Uterus (tissue), 4 donors: ENCODE measurements at regions of chr20 and their contacts with region 1.

Region 1: GRCh38 chr20:4607287-4607713 is 114.4 kb upstream of the PRND start:
- DNase-seq: peak; percentile 55 to 62
- H3K4me3 ChIP-seq: no peak overlapping the region
- H3K27ac ChIP-seq: peak overlapping the region in 1 of 2 donors; percentile 42
- H3K4me1 ChIP-seq: peaks cover 0 to 3% of the 10 kb centered on the region in 2 donors
- H3K27me3 ChIP-seq: no peaks in the 10 kb centered on the region
- CTCF ChIP-seq: peak; percentile 89 to 96 (median 96)
- POLR2A ChIP-seq: no peak

Region 2: DNA sequence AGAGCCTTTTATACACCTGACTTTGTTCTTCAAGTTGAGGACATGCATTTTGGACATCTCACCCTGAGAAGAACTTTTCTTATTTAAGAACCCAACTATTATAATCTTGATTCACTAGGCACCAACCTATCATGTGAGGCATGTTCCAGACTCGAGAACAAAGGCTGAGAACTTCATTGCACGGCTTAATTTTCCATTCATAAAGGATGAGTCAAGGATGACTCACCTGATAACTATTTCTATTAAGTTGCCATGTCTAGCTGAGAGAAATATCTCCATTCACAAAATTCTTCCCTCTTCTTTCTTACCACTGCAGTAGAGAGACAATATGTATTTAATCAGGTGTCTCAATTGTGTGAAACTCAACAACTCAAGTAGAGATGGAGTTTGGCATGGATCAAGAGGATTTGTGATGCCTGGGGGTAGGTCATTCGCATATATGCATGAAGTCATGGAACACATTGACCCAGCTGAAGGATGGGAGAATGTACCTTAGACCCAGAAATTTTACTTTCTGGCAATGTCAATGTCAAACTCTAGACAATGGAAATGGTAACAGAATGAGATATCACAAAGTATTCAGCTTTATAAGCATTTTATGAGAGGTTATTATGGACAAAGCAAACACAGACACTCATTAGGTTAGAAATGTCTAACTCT is 94.3 kb before region 1 on chr20:
- intact Hi-C with region 1: no loop called
- DNase-seq: no peak
- H3K4me3 ChIP-seq: no peak overlapping the region
- H3K27ac ChIP-seq: no peak overlapping the region
- H3K4me1 ChIP-seq: no peaks in the 10 kb centered on the region
- H3K27me3 ChIP-seq: no peaks in the 10 kb centered on the region
- CTCF ChIP-seq: no peak
- POLR2A ChIP-seq: no peak

Region 3: GRCh38 chr20:4633780-4634179 is 26.5 kb after region 1 on chr20:
- intact Hi-C with region 1: no loop called
- DNase-seq: no peak
- H3K4me3 ChIP-seq: no peak overlapping the region
- H3K27ac ChIP-seq: no peak overlapping the region
- H3K4me1 ChIP-seq: no peaks in the 10 kb centered on the region
- H3K27me3 ChIP-seq: no peaks in the 10 kb centered on the region
- CTCF ChIP-seq: no peak
- POLR2A ChIP-seq: no peak

Region 4: GRCh38 chr20:4720041-4720976 is 113.0 kb after region 1 on chr20:
- intact Hi-C with region 1: loop called (anchors 2 kb)
- DNase-seq: peak; percentile 76 to 84
- H3K4me3 ChIP-seq: no peak overlapping the region
- H3K27ac ChIP-seq: peak overlapping the region; percentile 82 to 94
- H3K4me1 ChIP-seq: peaks cover 0 to 8% of the 10 kb centered on the region in 2 donors
- H3K27me3 ChIP-seq: no peaks in the 10 kb centered on the region
- CTCF ChIP-seq: peak; percentile 67 to 87 (median 80)
- POLR2A ChIP-seq: no peak

Region 5: DNA sequence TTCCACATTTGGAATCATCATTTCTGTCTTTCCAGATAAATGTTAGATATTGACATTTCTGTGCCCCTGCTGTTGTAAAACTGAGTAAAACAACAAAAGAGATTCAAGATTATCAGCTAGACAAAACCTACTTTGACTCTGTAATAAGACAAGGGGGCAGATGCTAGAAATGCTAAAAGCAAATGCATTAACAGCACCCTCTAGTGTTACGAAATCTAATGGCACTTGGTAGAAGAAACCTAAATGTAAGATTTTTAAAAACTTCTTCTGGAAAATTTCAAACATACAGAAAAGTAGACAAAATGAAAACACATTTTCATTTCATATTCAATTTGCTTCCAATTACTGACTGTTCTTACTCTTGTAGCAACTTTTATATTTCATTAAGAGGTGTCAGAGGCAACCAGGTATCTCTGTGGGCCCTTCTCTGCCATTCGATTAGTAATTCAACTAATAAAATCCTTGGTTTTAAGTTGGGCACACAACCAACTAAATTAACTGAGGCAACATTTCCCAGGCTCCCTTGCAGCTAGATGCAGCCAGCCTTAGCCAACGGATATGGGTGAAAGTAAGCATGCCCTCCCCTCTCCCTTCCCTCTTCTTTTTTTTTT is 349.0 kb after region 1 on chr20:
- intact Hi-C with region 1: loop called (anchors 10 kb)
- DNase-seq: no peak
- H3K4me3 ChIP-seq: no peak overlapping the region
- H3K27ac ChIP-seq: no peak overlapping the region
- H3K4me1 ChIP-seq: no peaks in the 10 kb centered on the region
- H3K27me3 ChIP-seq: no peaks in the 10 kb centered on the region
- CTCF ChIP-seq: peak; percentile 72 to 80 (median 79)
- POLR2A ChIP-seq: no peak